Endothelial cell of umbilical vein (primary cell): ENCODE measurements at regions of chr1 and their contacts with region 1.

Region 1: GRCh38 chr1:209895709-209896108 is 42.3 kb upstream of the SYT14 start:
- DNase-seq: peak; percentile 84
- H3K4me3 ChIP-seq: no peak overlapping the region
- H3K27ac ChIP-seq: peak overlapping the region; percentile 77
- H3K4me1 ChIP-seq: peaks cover 19% of the 10 kb centered on the region
- H3K27me3 ChIP-seq: no peaks in the 10 kb centered on the region
- CTCF ChIP-seq: no peak
- POLR2A ChIP-seq: no peak

Region 2: DNA sequence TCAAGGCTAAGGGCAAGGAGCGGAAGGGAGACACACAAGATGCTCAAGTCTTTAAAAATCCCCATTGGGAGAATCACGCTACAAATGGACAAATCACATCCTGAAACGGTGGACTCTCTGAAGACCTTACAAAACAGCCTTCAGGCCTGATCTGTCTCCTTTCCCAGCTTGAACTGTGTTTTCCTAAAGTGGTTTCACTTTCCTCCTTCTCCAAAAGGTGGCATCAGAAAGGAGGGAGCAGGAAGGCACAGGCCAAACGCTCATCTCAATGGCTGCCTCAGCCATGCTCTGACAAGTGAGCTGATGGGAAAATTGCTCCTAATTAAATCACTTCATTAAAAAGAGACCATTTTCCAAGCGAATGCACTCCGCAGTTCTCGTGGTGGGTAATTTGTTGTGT is 20.2 kb before region 1 on chr1:
- CTCF ChIA-PET with region 1: interaction called, 19 read pairs
- POLR2A ChIA-PET with region 1: no interaction called
- dilution Hi-C with region 1: no loop called
- intact Hi-C with region 1: no loop called
- DNase-seq: peak; percentile 51
- H3K4me3 ChIP-seq: no peak overlapping the region
- H3K27ac ChIP-seq: no peak overlapping the region
- H3K4me1 ChIP-seq: peaks cover 22% of the 10 kb centered on the region
- H3K27me3 ChIP-seq: peaks cover 3 to 11% of the 10 kb centered on the region in 2 experiments
- CTCF ChIP-seq: peak; percentile 16 to 42
- POLR2A ChIP-seq: no peak